Aorta (tissue), 5 donors: ENCODE measurements at regions of chr4 and their contacts with region 1.

Region 1: DNA sequence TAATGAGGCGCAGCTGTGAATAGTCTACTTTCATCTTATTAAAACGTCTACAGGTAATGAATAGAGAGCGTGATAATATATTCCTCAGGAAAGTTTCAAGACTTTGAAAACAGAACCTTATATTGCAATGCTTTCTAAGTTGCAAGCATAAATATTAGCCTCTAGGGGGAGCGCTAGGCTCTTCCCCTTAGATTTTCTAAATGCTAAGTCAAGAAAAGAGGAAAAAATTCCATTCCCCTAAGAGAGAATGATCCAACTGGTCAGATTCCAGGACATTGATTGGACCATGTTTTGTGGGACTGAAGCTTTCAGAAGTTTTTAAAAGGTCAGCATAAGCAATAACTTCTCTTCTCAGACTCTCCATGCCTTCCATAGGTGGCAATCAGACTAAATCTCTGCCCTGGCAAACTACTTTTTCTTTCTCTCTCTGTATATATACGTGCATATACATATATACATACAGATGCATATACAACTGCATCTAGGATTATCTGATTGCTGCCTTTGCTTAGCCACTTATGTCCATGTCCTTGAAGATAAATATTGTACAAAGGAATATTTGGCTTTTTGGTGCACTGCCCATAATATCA is 492.9 kb downstream of the INPP4B start:
- DNase-seq: no peak
- ATAC-seq: peak; percentile 83
- H3K4me3 ChIP-seq: no peak overlapping the region
- H3K27ac ChIP-seq: no peak overlapping the region
- H3K4me1 ChIP-seq: peaks cover 6 to 10% of the 10 kb centered on the region in 2 donors
- H3K27me3 ChIP-seq: no peaks in the 10 kb centered on the region

Region 2: DNA sequence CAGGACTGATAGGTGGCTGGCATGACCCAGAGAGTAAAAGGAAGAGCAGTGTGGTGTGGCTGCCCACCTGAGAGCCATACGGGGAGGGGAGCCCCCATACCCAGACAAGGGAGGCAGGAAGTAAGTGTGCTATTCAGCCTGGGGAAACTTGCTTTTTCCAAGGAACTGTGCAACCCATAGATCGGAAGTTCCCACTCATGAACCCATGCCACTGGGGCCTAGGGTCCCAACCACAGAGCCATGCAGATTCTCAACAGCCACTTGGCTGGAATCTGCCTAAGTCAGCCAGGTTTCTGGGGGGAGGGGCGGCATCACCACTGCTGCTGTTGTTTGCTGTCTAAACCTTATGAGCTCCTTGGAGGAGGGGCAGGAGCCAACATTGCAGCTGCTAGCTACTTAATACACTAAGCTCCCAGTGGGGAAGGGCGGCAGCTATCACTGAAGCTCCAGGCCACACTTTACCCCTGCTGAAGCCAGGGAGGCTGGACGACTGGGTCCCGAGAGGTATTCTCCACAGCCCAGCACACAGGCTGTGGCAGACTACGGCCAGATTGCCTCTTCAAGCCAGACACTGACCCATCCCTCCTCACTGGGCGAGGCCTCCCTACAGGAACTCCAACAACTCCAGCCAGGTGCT is 82.5 kb after region 1 on chr4:
- intact Hi-C with region 1: no loop called
- DNase-seq: peak in 1 of 2 donors; percentile 52
- ATAC-seq: no peak
- H3K4me3 ChIP-seq: no peak overlapping the region
- H3K27ac ChIP-seq: no peak overlapping the region
- H3K4me1 ChIP-seq: no peaks in the 10 kb centered on the region
- H3K27me3 ChIP-seq: no peaks in the 10 kb centered on the region

Region 3: DNA sequence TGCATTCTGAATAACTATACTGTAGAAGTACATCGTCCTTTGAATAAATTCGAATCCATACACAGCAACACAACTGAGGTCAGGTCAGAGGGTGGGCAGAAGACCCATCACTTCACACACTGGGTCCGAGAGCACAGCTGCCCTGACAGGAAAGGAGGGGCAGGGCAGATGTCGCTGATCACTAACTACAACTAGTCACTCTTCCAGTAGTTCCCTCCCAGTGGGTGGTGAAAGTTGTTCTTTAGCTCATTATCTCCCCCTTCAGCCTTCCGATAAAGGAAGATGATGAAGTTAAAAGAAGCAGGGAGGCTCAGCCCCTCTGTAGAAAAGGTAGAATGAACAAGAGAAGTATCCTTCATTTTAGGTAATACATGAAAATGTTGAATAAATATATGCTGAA is 214.0 kb after region 1 on chr4:
- intact Hi-C with region 1: loop called in 1 of 2 experiments (anchors 10 kb)
- DNase-seq: no peak
- ATAC-seq: no peak
- H3K4me3 ChIP-seq: no peak overlapping the region
- H3K27ac ChIP-seq: no peak overlapping the region
- H3K4me1 ChIP-seq: no peaks in the 10 kb centered on the region
- H3K27me3 ChIP-seq: no peaks in the 10 kb centered on the region

Region 4: GRCh38 chr4:142719854-142720541 is 366.8 kb after region 1 on chr4:
- intact Hi-C with region 1: loop called in 1 of 2 experiments (anchors 5 kb)
- DNase-seq: no peak
- ATAC-seq: no peak
- H3K4me3 ChIP-seq: no peak overlapping the region
- H3K27ac ChIP-seq: no peak overlapping the region
- H3K4me1 ChIP-seq: no peaks in the 10 kb centered on the region
- H3K27me3 ChIP-seq: no peaks in the 10 kb centered on the region

Region 5: GRCh38 chr4:142840516-142841123 is 487.4 kb after region 1 on chr4:
- intact Hi-C with region 1: loop called (anchors 5 kb)
- DNase-seq: no peak
- ATAC-seq: no peak
- H3K4me3 ChIP-seq: no peak overlapping the region
- H3K27ac ChIP-seq: no peak overlapping the region
- H3K4me1 ChIP-seq: no peaks in the 10 kb centered on the region
- H3K27me3 ChIP-seq: no peaks in the 10 kb centered on the region

Region 6: GRCh38 chr4:142846729-142847596 is 493.7 kb after region 1 on chr4:
- intact Hi-C with region 1: loop called (anchors 5 kb)
- DNase-seq: peak; percentile 52 to 73
- ATAC-seq: peak; percentile 47
- H3K4me3 ChIP-seq: peak overlapping the region; percentile 9 to 84
- H3K27ac ChIP-seq: peak overlapping the region in 1 of 2 donors; percentile 22
- H3K4me1 ChIP-seq: no peaks in the 10 kb centered on the region
- H3K27me3 ChIP-seq: no peaks in the 10 kb centered on the region